GM10248 (cell line): ENCODE measurements at regions of chr3 and their contacts with region 1.

Region 1: GRCh38 chr3:67790043-67790442 is 135.6 kb upstream of the SUCLG2 start:
- DNase-seq: peak; percentile 37
- CTCF ChIP-seq: peak; percentile 63

Region 2: GRCh38 chr3:67384760-67385397 is 405.2 kb before region 1 on chr3:
- CTCF ChIA-PET with region 1: interaction called, 89 read pairs
- POLR2A ChIA-PET with region 1: no interaction called
- DNase-seq: peak; percentile 22
- CTCF ChIP-seq: peak; percentile 53